SK-N-SH (cell line): ENCODE measurements at regions of chr7 and their contacts with region 1.

Region 1: GRCh38 chr7:130069978-130070860 is at the start of gene KLHDC10:
- DNase-seq: peak; percentile 99
- H3K4me3 ChIP-seq: peak within 1 kb of the TSS; percentile 72 to 90
- H3K27ac ChIP-seq: peak within 1 kb of the TSS; percentile 60 to 82
- H3K4me1 ChIP-seq: peaks cover 0 to 14% of the 10 kb centered on the region in 2 experiments; a peak in 2 of 4 replicates
- H3K27me3 ChIP-seq: no peaks in the 10 kb centered on the region
- CTCF ChIP-seq: no peak
- EP300 ChIP-seq: no peak; a peak in 2 of 4 replicates
- RAD21 ChIP-seq: peak; percentile 11; the same call in 1 of the 2 replicates
- polyA plus RNA-seq, gene KLHDC10: 15.9 and 17.8 TPM in 2 replicates

Region 2: DNA sequence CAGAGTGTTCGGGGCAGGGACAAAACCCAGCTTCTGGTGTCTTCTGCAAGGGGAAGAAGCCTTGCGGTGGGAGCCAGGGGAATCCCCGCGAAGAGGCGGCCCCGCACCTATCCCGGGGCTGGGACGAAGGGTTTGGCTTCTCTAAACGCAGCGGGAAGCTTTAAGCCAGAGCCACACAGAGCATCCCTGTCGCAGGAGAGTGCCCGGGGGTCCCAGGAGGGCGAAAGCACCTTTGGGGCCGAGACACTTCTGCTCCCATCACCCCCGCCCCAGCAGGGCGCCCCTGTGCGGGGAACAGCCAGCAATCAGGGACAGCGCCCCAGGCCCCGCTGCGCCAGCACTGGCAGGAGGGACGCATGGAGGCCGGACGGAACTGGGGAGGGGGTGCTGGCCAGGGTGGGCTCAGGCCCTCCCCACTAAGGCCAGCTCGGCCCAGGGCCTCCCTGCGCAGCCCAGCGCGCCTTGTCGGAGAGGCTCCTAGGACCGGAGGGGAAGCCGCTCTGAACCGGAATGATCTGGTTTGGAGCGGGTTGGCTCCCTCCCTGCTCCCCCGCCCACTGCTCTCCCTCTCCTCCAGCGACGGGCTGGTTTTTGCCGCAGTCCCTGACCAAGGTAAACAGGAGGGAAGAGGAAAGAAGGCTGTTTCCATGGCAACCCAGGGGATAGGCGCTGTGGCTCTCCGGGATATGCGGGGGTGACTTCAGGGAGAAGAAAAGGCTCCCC is 71.1 kb after region 1 on chr7:
- CTCF ChIA-PET with region 1: interaction called, 30 read pairs
- POLR2A ChIA-PET with region 1: interaction called, 4 read pairs
- DNase-seq: peak; percentile 95
- H3K4me3 ChIP-seq: peak overlapping the region in 1 of 2 experiments; percentile 19; a peak in 1 of 4 replicates
- H3K27ac ChIP-seq: peak overlapping the region in 1 of 2 experiments; percentile 12; a peak in 1 of 4 replicates
- H3K4me1 ChIP-seq: peaks cover 5 to 15% of the 10 kb centered on the region in 2 experiments; a peak in 2 of 4 replicates
- H3K27me3 ChIP-seq: no peaks in the 10 kb centered on the region
- CTCF ChIP-seq: no peak
- EP300 ChIP-seq: no peak
- RAD21 ChIP-seq: no peak

Region 3: GRCh38 chr7:130182990-130183389 is 112.8 kb after region 1 on chr7:
- CTCF ChIA-PET with region 1: interaction called, 13 read pairs
- POLR2A ChIA-PET with region 1: no interaction called
- DNase-seq: no peak
- H3K4me3 ChIP-seq: no peak overlapping the region
- H3K27ac ChIP-seq: no peak overlapping the region
- H3K4me1 ChIP-seq: no peaks in the 10 kb centered on the region
- H3K27me3 ChIP-seq: no peaks in the 10 kb centered on the region
- CTCF ChIP-seq: no peak
- EP300 ChIP-seq: no peak
- RAD21 ChIP-seq: no peak

Region 4: GRCh38 chr7:130595986-130596385 is 525.8 kb after region 1 on chr7:
- CTCF ChIA-PET with region 1: no interaction called
- POLR2A ChIA-PET with region 1: no interaction called
- DNase-seq: no peak
- H3K4me3 ChIP-seq: no peak overlapping the region
- H3K27ac ChIP-seq: no peak overlapping the region
- H3K4me1 ChIP-seq: no peaks in the 10 kb centered on the region
- H3K27me3 ChIP-seq: no peaks in the 10 kb centered on the region
- CTCF ChIP-seq: no peak
- EP300 ChIP-seq: no peak
- RAD21 ChIP-seq: no peak

Region 5: DNA sequence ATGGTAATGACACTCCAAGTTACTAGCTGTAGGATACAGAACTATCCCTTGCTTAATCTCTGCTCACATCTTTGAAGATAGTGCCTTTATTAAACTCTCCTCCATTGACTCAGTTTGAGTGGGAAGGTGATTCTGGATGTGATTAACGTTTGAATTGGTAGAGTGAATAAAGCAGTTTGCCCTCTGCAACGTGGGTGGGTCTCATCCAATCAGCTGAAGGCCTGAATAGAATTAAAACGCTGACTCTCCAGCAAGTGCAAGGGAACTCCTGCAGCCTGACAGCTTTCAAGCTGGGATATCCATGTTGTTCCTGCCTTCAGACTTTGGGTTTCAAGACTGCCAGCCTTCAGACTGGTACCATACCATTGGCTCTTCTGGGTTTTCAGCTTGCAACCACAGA is 642.2 kb after region 1 on chr7:
- CTCF ChIA-PET with region 1: interaction called, 10 read pairs
- POLR2A ChIA-PET with region 1: interaction called, 3 read pairs
- DNase-seq: no peak
- H3K4me3 ChIP-seq: no peak overlapping the region
- H3K27ac ChIP-seq: no peak overlapping the region
- H3K4me1 ChIP-seq: no peaks in the 10 kb centered on the region
- H3K27me3 ChIP-seq: peaks cover 6% of the 10 kb centered on the region; the same call in 1 of the 2 replicates
- CTCF ChIP-seq: no peak
- EP300 ChIP-seq: no peak
- RAD21 ChIP-seq: no peak

Region 6: DNA sequence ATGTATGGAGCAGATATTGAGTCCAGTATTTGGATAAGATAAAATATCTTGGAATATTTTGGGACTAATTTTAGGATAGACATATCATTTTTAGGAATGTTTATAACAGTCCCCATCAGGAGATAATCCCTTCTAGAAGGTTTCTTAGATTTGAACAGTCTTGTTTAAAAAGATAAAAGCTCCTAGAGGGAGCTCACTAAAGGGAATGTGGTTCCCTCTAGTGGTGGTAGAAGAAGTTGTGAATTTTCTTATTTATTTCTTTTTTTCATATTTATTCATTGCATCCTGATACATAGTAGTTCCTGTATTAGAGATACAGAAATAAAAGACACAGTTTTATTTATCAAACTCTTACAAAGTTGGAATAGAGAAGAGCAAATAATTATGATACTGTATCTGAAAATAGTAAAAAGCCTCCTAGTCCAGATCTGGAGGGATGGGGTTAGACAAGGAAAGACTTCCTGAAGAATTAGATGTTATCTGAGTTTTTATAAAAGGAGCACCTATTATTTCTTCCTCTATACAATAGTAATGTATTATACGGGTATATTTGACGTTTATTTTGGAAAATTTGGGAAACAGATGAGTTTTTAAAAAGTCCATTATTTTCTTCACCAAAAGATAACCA is 688.3 kb after region 1 on chr7:
- CTCF ChIA-PET with region 1: interaction called, 57 read pairs
- POLR2A ChIA-PET with region 1: no interaction called
- DNase-seq: peak; percentile 56
- H3K4me3 ChIP-seq: no peak overlapping the region
- H3K27ac ChIP-seq: no peak overlapping the region
- H3K4me1 ChIP-seq: no peaks in the 10 kb centered on the region
- H3K27me3 ChIP-seq: peaks cover 22% of the 10 kb centered on the region; the same call in 1 of the 2 replicates
- CTCF ChIP-seq: peak; percentile 98
- EP300 ChIP-seq: no peak
- RAD21 ChIP-seq: peak; percentile 87